Activated CD8-positive, alpha-beta T cell treated with anti-CD3 and anti-CD28 coated beads, Interleukin-2, amount 10 ng/mL, durations not matched to agents 7 days and 5 days (primary cell): ENCODE measurements at regions of chr6 and their contacts with region 1.

Region 1: GRCh38 chr6:33126101-33126714 is 50.4 kb downstream of the HLA-DPB1 start:
- DNase-seq: peak; percentile 78
- ATAC-seq: peak; percentile 84
- H3K4me3 Mint-ChIP-seq: no peak overlapping the region
- H3K27ac Mint-ChIP-seq: no peak overlapping the region
- H3K4me1 Mint-ChIP-seq: peaks cover 5% of the 10 kb centered on the region
- H3K27me3 Mint-ChIP-seq: peaks cover 30% of the 10 kb centered on the region

Region 2: DNA sequence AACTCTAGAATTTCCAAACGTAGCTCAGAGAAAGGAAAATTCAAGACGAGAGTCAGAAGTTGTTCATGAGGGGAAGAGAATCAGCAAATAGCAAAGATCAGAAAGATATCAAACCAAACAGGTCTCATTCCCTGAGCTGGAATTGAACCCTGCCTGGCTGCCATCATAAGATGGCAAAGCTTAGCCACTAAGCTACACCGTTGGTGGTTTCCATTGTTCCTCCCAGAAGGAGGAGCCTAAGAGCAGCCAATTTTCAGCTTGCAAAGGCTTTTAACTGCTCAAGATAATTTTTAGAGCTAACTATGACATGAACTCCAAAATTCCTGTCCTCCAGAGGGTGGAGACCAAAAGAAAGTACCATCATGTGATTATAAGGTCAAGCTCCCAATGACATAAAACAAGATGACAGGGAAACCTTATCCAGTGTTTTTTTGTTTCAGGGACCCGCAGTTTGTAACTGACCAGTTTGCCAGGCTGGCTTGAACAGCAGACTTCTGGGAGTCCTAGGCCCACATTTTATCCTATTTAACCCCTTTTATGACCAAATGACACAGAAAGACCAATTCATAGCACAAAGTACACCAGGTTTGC is 10.2 kb after region 1 on chr6:
- CTCF ChIA-PET with region 1: interaction called, 62 read pairs
- POLR2A ChIA-PET with region 1: no interaction called
- DNase-seq: no peak
- ATAC-seq: no peak
- H3K4me3 Mint-ChIP-seq: no peak overlapping the region
- H3K27ac Mint-ChIP-seq: no peak overlapping the region
- H3K4me1 Mint-ChIP-seq: no peaks in the 10 kb centered on the region
- H3K27me3 Mint-ChIP-seq: peaks cover 30% of the 10 kb centered on the region

Region 3: GRCh38 chr6:33147807-33148666 is 21.8 kb after region 1 on chr6:
- CTCF ChIA-PET with region 1: interaction called, 86 read pairs
- POLR2A ChIA-PET with region 1: no interaction called
- DNase-seq: no peak
- ATAC-seq: no peak
- H3K4me3 Mint-ChIP-seq: no peak overlapping the region
- H3K27ac Mint-ChIP-seq: no peak overlapping the region
- H3K4me1 Mint-ChIP-seq: peaks cover 7% of the 10 kb centered on the region
- H3K27me3 Mint-ChIP-seq: peaks cover 20% of the 10 kb centered on the region

Region 4: GRCh38 chr6:33154349-33154748 is 28.1 kb after region 1 on chr6:
- CTCF ChIA-PET with region 1: interaction called, 86 read pairs
- POLR2A ChIA-PET with region 1: no interaction called
- DNase-seq: no peak
- ATAC-seq: no peak
- H3K4me3 Mint-ChIP-seq: no peak overlapping the region
- H3K27ac Mint-ChIP-seq: no peak overlapping the region
- H3K4me1 Mint-ChIP-seq: no peaks in the 10 kb centered on the region
- H3K27me3 Mint-ChIP-seq: peaks cover 16% of the 10 kb centered on the region

Region 5: GRCh38 chr6:33161354-33162331 is 35.4 kb after region 1 on chr6:
- CTCF ChIA-PET with region 1: interaction called, 10 read pairs
- POLR2A ChIA-PET with region 1: no interaction called
- DNase-seq: peak; percentile 87
- ATAC-seq: peak; percentile 98
- H3K4me3 Mint-ChIP-seq: peak overlapping the region; percentile 80
- H3K27ac Mint-ChIP-seq: peak overlapping the region; percentile 89
- H3K4me1 Mint-ChIP-seq: peaks cover 20% of the 10 kb centered on the region
- H3K27me3 Mint-ChIP-seq: peaks cover 3% of the 10 kb centered on the region

Region 6: DNA sequence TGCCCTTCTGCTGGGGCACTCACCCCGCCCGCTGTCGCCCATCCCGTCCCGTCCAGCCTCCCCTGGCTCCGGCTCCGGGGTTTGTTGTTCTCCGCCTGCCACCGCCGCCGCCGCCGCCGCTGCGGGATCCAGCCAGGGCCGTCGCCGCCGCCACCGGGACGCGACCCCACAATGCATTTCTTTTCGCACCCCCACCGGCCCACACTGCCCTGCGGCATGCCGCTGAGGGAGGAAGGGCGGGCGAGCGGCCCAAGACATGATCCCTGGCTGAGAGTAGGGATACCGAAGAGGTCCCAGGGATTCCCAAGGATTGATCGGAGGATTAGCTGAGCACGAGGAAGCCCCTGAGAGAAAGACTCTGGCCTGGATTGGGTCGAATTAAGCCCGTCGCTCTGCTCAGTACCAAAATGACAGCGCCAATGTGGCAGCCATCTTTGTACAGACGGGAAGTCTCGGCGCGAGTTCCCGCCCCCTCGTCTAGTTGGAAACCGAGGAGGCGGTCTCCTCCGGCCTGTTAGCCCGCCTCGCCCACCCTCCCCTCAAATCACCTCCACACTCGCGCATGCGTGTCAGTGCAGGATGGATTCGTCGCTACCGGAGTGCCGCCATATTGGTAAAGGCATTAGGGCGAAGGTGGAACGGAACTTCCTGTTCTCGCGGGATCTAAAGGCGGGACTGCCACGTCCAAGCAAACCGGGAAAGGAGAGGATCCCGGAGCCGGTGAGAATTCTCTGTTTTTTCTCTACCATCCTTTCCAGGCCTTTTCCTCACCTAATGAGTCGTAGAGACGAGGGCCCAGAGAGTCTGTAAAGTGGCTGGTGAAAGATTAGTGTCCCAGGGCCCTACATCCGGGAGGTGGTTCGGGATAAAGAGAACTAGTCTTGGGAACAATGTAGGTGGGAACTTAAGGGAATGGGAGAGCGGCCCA is 74.3 kb after region 1 on chr6 and contains the starts of genes RXRB and SLC39A7:
- CTCF ChIA-PET with region 1: interaction called, 18 read pairs
- POLR2A ChIA-PET with region 1: no interaction called
- DNase-seq: peak; percentile 100
- ATAC-seq: peak; percentile 73
- H3K4me3 Mint-ChIP-seq: peak within 1 kb of the TSS; percentile 100
- H3K27ac Mint-ChIP-seq: peak within 1 kb of the TSS; percentile 98
- H3K4me1 Mint-ChIP-seq: peaks cover 65% of the 10 kb centered on the region
- H3K27me3 Mint-ChIP-seq: no peaks in the 10 kb centered on the region
- total RNA-seq, gene RXRB: 33.5 to 34.5 TPM
- total RNA-seq, gene SLC39A7: 45.6 to 50.8 TPM

Region 7: GRCh38 chr6:33208091-33208967 is 82.1 kb after region 1 on chr6 and contains the start of gene RING1:
- CTCF ChIA-PET with region 1: interaction called, 10 read pairs
- POLR2A ChIA-PET with region 1: no interaction called
- DNase-seq: peak; percentile 90
- ATAC-seq: peak; percentile 60
- H3K4me3 Mint-ChIP-seq: peak within 1 kb of the TSS; percentile 80
- H3K27ac Mint-ChIP-seq: peak within 1 kb of the TSS; percentile 87
- H3K4me1 Mint-ChIP-seq: peaks cover 64% of the 10 kb centered on the region
- H3K27me3 Mint-ChIP-seq: peaks cover 4% of the 10 kb centered on the region
- total RNA-seq, gene RING1: 39.8 to 44.6 TPM